HAP-1 (cell line): ENCODE measurements at regions of chr3 and their contacts with region 1.

Region 1: DNA sequence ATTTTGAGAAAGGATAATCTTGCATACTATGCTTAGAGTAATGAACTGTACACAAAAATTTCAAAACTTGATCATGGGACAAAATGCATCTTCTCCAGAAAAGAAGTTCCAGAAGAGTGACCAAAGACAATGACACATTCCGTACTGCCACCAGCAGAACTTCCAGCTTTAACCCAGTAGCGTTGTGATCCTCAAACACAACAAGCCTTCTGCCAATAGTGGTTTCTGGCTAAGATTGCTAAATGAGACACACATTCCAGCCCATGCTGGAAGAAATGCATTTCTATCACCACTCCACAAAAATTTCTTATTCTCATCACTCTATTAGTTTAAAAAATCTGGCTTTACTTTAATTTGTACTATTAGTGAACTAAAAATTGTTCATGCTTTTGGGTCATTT is 334.9 kb downstream of the TBC1D5 start:
- DNase-seq: no peak
- H3K4me3 ChIP-seq: no peak overlapping the region
- H3K4me1 ChIP-seq: no peaks in the 10 kb centered on the region
- H3K27me3 ChIP-seq: no peaks in the 10 kb centered on the region

Region 2: GRCh38 chr3:16319307-16319706 is 1088.3 kb before region 1 on chr3:
- in situ Hi-C with region 1: no loop called
- DNase-seq: peak; percentile 15 to 56
- H3K4me3 ChIP-seq: no peak overlapping the region
- H3K4me1 ChIP-seq: no peaks in the 10 kb centered on the region
- H3K27me3 ChIP-seq: no peaks in the 10 kb centered on the region

Region 3: GRCh38 chr3:17006132-17006852 is 401.3 kb before region 1 on chr3:
- in situ Hi-C with region 1: no loop called
- DNase-seq: peak; percentile 60 to 91
- H3K4me3 ChIP-seq: no peak overlapping the region
- H3K4me1 ChIP-seq: peaks cover 33% of the 10 kb centered on the region
- H3K27me3 ChIP-seq: no peaks in the 10 kb centered on the region

Region 4: GRCh38 chr3:17261633-17262369 is 145.8 kb before region 1 on chr3:
- in situ Hi-C with region 1: loop called (anchors 5 kb)
- DNase-seq: no peak
- H3K4me3 ChIP-seq: no peak overlapping the region
- H3K4me1 ChIP-seq: peaks cover 8% of the 10 kb centered on the region; the same call in 1 of the 2 replicates
- H3K27me3 ChIP-seq: no peaks in the 10 kb centered on the region

Region 5: DNA sequence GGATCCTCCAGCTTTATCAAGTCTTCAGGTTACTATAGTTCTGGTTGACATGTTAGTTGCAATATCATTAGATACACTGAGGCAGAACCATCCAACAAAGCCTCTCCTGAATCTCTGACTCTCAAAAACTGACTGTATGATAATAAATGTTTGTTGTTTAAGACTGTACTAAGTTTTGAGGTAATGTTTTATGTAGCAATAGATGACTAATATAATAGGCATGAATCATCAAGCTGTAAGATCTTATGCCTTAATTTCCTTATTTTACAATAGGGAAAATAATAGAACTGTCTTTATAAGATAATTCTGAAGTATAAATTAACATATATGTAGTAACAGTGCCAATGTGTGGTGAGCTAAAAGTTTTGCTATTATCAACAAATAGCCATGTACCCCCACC is 423.8 kb after region 1 on chr3:
- in situ Hi-C with region 1: no loop called
- DNase-seq: no peak
- H3K4me3 ChIP-seq: no peak overlapping the region
- H3K4me1 ChIP-seq: peaks cover 6% of the 10 kb centered on the region
- H3K27me3 ChIP-seq: no peaks in the 10 kb centered on the region